ENCODE measurements at regions of chr5 and their contacts with region 1.

Region 1: DNA sequence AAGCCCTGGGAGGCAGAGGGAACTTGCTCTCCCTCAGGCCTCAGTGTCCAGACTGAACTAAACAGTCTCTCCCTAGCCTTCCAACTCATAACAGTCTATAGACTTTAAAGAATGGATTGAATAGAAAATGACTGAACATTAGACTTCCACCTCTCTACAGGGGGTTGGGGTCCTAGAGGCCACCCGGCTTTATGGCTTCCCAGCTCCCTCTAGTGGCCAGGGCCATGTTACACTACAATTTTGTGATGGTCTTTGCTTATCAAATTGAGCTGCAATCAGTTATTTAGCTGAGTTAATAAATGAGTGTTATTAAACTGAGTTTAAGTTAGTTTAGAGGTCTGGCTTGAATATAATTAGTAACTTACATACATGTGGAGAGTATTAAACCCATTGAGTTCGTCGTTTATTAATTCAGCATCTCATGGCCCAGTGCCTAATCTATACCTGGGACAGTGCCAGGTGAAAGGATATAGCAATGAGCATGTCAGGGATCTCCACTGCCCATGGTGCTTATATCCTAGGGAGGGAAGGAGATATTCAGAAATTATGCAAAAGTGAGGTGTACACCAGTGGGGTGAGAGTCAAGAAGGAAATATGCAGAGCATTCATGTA is 105.2 kb downstream of the SH3TC2 start:
- DNase-seq: peak; percentile 64
- ATAC-seq: peak; percentile 51
- H3K4me3 Mint-ChIP-seq: no peak overlapping the region
- H3K27ac Mint-ChIP-seq: no peak overlapping the region
- H3K4me1 Mint-ChIP-seq: no peaks in the 10 kb centered on the region
- H3K27me3 Mint-ChIP-seq: peaks cover 2% of the 10 kb centered on the region

Region 2: GRCh38 chr5:148740966-148741742 is 216.5 kb before region 1 on chr5:
- CTCF ChIA-PET with region 1: interaction called, 86 read pairs
- DNase-seq: no peak
- ATAC-seq: no peak
- H3K4me3 Mint-ChIP-seq: no peak overlapping the region
- H3K27ac Mint-ChIP-seq: no peak overlapping the region
- H3K4me1 Mint-ChIP-seq: peaks cover 3% of the 10 kb centered on the region
- H3K27me3 Mint-ChIP-seq: peaks cover 36% of the 10 kb centered on the region

Region 3: DNA sequence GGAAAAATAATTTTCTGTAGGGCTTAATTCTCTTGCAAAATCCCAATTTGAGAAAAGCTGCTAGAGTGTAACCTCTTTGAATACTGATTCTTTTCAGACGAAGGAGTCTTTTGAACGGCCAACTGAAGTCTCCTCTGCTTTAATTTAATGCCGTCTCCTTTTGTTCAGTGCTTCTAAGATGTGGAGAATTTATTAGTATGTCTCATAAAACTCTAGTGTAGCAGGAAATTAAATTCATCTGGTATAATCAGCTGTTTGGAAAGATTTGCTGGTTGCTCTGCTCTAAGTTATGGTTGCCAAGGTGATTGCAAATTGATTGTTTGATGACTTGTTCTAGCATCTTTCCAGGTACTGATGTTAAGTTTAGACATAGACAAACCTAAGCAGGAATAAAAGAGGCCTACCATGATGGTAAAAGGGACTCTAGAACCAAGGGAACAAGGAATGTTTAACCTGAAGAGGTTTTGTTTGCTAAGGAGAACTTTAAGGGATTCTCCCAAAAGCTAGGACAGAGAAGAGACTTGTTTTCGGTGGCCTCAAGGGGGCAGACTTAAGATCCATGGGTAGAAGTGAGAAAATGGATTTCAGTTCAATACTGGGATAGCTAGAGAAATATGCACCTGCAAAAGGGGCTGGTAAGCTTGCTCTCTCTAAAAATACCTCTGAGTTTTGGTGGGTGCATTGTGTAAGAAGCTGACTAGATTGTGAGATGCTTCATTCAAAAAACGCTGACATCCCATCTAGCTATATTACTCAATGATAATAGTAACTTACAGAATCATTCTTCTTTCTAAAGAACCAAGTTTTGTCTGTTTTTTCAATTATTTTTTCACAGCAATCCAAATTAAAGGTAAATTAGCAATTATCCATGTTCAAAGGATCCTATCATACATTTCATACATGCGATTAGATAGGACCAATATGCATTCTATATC is 137.0 kb before region 1 on chr5:
- CTCF ChIA-PET with region 1: interaction called, 41 read pairs
- DNase-seq: no peak
- ATAC-seq: peak; percentile 54
- H3K4me3 Mint-ChIP-seq: no peak overlapping the region
- H3K27ac Mint-ChIP-seq: no peak overlapping the region
- H3K4me1 Mint-ChIP-seq: peaks cover 8% of the 10 kb centered on the region
- H3K27me3 Mint-ChIP-seq: peaks cover 28% of the 10 kb centered on the region

Region 4: DNA sequence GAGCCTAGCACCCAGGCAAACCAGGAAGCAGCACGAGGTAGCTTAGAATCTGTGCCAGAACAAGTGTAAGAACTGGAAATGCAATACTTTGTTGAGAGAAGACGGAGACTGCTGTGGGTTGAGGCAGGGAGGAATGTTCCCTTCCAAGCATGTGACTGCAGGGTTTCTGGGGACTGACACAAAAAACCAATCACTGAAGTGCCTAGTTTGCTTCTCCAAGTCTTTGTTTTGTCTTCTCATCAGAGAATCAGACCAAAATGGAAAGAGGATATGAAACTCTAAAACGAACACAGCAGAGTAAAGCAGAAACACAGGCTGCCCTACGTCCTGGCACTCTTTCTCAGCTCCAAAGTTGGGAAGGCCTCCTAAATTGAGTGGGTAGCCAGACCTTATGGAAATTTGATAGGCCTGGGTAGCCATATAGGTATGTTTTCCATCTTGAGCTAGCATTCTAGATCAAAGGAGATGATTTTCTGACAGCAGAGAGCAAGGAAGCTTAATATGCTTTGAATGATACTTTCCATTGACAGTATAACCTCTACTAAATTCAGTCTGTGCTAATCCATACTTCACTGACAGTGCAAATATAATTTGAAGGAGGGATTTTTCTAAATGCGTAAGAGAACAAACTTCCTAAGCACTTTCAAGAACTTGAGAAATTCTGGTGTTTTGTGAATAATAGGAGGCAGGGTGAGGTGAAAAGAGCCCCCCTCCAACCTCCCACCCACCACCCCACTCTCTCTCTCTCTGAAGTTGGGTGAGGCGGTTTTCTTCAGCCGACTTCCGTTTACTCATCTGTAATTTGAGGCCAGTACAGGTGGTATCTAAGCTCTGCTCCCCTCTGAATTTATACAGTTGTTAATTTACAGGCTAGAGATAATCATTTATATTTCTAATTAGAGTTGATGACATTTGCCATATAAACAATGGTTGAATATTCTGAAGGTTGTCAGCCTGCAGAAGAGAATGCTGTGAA is 125.8 kb before region 1 on chr5:
- CTCF ChIA-PET with region 1: interaction called, 16 read pairs
- DNase-seq: no peak
- ATAC-seq: no peak
- H3K4me3 Mint-ChIP-seq: no peak overlapping the region
- H3K27ac Mint-ChIP-seq: no peak overlapping the region
- H3K4me1 Mint-ChIP-seq: peaks cover 83% of the 10 kb centered on the region
- H3K27me3 Mint-ChIP-seq: peaks cover 10% of the 10 kb centered on the region

Region 5: DNA sequence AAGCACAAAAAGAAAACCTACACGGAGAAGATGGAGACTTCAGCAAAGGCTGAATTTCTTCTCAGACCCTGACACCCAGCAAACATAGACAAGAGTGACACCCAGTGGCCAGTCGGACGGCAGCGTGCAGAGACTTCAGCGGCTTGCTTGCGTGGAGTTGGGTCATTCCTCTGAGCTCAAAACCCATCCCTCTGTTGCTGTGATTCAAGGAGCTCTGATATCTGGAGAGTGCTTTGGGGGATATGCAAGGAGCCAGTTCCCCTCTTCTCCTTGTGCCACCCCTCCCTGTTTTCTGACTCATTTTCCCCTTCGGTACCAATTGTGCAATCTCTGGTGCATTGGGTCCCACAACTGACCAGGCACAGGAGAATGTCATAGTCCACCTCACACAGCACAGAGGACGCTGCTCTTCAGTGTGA is 77.7 kb after region 1 on chr5:
- CTCF ChIA-PET with region 1: interaction called, 17 read pairs
- DNase-seq: peak; percentile 84
- ATAC-seq: peak; percentile 92
- H3K4me3 Mint-ChIP-seq: no peak overlapping the region
- H3K27ac Mint-ChIP-seq: no peak overlapping the region
- H3K4me1 Mint-ChIP-seq: peaks cover 23% of the 10 kb centered on the region
- H3K27me3 Mint-ChIP-seq: peaks cover 11% of the 10 kb centered on the region

Region 6: DNA sequence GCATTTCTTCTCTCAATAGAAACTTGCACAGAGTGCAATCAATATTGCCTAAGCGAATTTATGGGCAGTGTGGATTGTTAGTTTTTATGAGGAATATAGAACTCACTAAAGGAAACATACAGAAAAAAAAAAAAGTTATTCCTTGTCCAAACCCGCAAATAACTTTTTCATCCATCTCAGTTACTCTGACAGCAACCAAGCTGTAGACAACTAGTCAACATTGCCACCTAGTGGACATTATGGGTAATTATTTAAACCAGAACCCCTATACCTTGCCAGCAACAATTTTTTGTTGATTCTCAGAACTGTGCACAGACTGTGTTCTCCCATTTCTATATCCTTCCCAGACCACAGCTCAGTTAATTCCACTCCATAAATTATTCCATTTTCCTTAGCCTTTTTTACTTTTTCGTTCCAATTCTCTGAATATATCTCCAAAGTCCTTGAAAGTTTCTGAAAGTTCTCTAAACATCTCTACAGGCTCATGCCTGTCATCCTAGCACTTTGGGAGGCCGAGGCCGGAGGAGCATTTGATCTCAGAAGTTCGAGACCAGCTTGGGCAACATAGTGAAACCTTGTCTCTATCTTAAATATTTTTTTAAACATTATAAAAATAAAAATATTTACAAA is 311.3 kb after region 1 on chr5:
- CTCF ChIA-PET with region 1: no interaction called
- DNase-seq: no peak
- ATAC-seq: peak; percentile 67
- H3K4me3 Mint-ChIP-seq: no peak overlapping the region
- H3K27ac Mint-ChIP-seq: no peak overlapping the region
- H3K4me1 Mint-ChIP-seq: peaks cover 6% of the 10 kb centered on the region
- H3K27me3 Mint-ChIP-seq: peaks cover 60% of the 10 kb centered on the region